ENCODE measurements at regions of chr10 and their contacts with region 1.

Region 1: DNA sequence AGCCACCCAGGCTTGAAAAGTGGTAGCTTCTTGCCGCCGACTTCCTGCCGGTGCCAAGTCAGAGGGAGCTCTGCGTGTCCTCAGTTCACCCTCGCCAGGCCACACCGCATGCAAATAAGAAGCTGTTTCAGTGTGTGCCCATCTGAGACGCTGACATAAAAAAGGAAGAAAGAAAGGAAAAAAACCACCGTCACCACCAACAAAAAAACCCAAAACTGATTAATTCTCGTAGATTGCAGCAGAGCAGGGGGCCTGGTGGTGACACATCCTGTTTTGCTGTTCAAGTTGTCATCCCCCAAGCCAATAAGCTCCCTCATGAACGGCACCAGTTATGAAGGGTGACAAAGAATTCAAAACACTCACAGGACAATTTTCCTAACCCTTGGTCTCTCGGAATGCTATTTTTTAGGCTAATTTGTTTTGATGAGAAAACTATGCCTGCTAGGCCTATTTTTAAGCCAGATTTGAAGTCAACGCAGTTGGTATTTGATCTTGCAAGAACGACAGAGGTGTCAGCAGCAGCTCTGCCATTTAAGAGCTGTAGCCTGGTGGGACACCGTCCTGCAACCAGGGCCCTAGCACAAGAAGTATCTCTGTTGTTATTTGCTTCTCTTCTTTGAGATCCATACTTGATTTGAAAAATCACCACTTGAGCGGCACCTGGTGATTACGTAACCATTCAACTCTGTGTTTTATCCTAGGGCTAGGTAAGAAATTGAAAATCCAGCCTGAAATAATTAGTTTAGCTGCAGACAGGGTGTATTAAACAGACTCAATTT is 145.6 kb downstream of the PFKFB3 start:
- DNase-seq: peak; percentile 65
- ATAC-seq: peak; percentile 91
- H3K4me3 Mint-ChIP-seq: peak overlapping the region; percentile 80
- H3K27ac Mint-ChIP-seq: peak overlapping the region; percentile 97
- H3K4me1 Mint-ChIP-seq: peaks cover 57% of the 10 kb centered on the region
- H3K27me3 Mint-ChIP-seq: no peaks in the 10 kb centered on the region
- CTCF ChIP-seq: no peak

Region 2: GRCh38 chr10:6108603-6109443 is 239.5 kb before region 1 on chr10:
- CTCF ChIA-PET with region 1: no interaction called
- POLR2A ChIA-PET with region 1: no interaction called
- intact Hi-C with region 1: loop called (anchors 1 kb)
- DNase-seq: no peak
- ATAC-seq: peak; percentile 84
- H3K4me3 Mint-ChIP-seq: no peak overlapping the region
- H3K27ac Mint-ChIP-seq: peak overlapping the region; percentile 65
- H3K4me1 Mint-ChIP-seq: peaks cover 12% of the 10 kb centered on the region
- H3K27me3 Mint-ChIP-seq: no peaks in the 10 kb centered on the region
- CTCF ChIP-seq: peak; percentile 88

Region 3: DNA sequence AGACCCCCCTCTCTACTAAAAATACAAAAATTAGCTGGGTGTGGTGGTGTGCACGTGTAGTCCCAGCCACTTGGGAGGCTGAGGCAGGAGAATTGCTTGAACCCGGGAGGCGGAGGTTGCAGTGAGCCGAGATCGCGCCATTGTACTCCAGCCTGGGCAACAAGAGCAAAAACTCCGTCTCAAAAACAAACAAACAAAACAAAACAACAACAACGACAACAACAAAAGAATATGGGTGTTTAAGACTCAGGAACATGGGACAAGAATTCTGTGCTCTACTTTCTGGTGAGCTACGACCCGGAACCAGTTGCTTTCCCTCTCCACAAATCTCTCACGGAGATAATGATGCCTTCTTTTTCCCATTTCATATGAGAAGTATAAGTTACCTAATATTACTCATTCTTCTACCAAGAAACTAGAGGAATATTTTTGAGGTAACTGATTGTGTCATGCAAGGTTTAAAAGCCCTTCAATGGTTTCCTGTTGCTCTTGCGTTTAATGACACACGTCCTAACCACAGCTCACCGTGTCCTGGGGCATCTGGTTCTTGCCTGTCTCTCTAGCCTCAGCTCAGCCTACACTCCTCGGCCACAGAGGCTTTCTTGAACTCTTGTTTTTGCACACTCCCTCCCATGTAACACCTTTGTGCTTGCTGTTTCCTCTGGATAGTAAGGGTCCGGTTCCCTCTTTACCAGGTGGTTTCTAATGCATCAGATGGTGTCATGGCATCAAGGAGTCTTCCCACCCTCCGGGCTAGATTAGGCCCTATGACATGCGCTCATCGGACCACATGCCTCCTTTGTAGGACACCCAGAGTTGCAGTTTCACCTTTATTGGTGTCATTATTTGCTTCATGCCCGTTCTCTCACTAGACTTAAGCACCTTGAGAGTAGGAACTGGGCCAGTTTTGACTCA is 78.1 kb before region 1 on chr10:
- CTCF ChIA-PET with region 1: interaction called, 4 read pairs
- POLR2A ChIA-PET with region 1: interaction called, 29 read pairs
- intact Hi-C with region 1: loop called (anchors 1 kb)
- DNase-seq: peak; percentile 19
- ATAC-seq: peak; percentile 49
- H3K4me3 Mint-ChIP-seq: peak overlapping the region; percentile 24
- H3K27ac Mint-ChIP-seq: peak overlapping the region; percentile 73
- H3K4me1 Mint-ChIP-seq: peaks cover 35% of the 10 kb centered on the region
- H3K27me3 Mint-ChIP-seq: no peaks in the 10 kb centered on the region
- CTCF ChIP-seq: no peak

Region 4: DNA sequence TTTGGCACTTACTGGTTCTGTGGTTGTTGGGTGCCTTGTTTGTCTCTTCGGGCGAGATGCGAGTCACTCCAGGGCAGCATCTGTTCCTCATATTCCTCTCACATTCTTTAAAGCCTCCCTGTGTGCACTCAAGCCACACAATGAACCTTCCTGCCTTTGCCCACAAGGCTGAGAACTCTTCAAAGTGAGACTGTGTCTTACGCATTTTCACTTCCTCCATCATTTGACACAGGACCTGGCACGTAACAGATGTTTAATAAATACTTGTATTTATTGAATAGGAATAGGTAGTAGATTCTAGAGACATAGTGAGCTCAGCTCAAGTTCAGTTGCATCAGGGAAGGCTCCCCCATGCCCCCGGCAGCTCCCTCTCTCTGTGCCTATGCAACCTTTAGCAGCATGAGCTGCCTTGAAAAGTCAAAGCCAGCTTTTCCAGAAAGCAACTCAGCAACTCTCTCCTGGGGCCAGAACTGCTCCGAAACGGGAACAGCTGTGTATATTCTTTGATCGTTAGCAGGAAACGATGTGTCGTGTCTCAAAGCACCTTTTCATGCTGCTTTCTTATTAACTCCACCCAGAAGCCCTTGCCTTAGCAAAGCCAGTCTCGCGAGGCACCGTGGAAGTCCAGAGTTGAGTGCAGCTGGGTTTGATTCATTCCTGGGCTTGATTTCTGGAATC is 48.0 kb before region 1 on chr10:
- CTCF ChIA-PET with region 1: interaction called, 26 read pairs
- POLR2A ChIA-PET with region 1: interaction called, 129 read pairs
- intact Hi-C with region 1: loop called (anchors 1 kb)
- DNase-seq: peak; percentile 48
- ATAC-seq: peak; percentile 80
- H3K4me3 Mint-ChIP-seq: peak overlapping the region; percentile 75
- H3K27ac Mint-ChIP-seq: peak overlapping the region; percentile 96
- H3K4me1 Mint-ChIP-seq: peaks cover 82% of the 10 kb centered on the region
- H3K27me3 Mint-ChIP-seq: no peaks in the 10 kb centered on the region
- CTCF ChIP-seq: no peak

Region 5: GRCh38 chr10:6320320-6321010 is 27.8 kb before region 1 on chr10:
- CTCF ChIA-PET with region 1: interaction called, 13 read pairs
- POLR2A ChIA-PET with region 1: interaction called, 39 read pairs
- intact Hi-C with region 1: loop called (anchors 1 kb)
- DNase-seq: peak; percentile 24
- ATAC-seq: peak; percentile 92
- H3K4me3 Mint-ChIP-seq: peak overlapping the region; percentile 57
- H3K27ac Mint-ChIP-seq: no peak overlapping the region
- H3K4me1 Mint-ChIP-seq: peaks cover 23% of the 10 kb centered on the region
- H3K27me3 Mint-ChIP-seq: no peaks in the 10 kb centered on the region
- CTCF ChIP-seq: no peak

Region 6: DNA sequence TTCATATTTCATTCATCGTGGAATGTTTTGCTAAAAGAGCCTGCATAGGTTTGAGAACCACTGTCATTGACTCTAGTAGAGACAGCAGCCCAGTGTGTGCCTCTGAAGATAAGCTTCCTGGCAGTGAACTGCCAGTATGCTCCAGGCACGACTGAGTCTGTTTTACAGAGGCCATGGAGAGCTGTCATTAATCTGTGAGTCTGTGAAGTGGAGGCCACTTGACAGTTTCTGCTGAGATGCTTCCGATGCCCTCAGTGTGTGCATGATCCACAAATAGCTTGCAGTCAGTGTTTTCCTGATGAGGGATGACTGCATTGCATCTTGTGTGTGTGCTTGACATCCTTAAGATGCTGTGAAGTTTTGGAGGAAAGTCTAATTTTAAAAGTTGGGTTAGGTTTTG is 16.6 kb after region 1 on chr10:
- CTCF ChIA-PET with region 1: no interaction called
- POLR2A ChIA-PET with region 1: interaction called, 10 read pairs
- intact Hi-C with region 1: no loop called
- DNase-seq: no peak
- ATAC-seq: no peak
- H3K4me3 Mint-ChIP-seq: no peak overlapping the region
- H3K27ac Mint-ChIP-seq: no peak overlapping the region
- H3K4me1 Mint-ChIP-seq: peaks cover 4% of the 10 kb centered on the region
- H3K27me3 Mint-ChIP-seq: no peaks in the 10 kb centered on the region
- CTCF ChIP-seq: no peak

Region 7: GRCh38 chr10:6542999-6543430 is 194.7 kb after region 1 on chr10:
- CTCF ChIA-PET with region 1: no interaction called
- POLR2A ChIA-PET with region 1: no interaction called
- intact Hi-C with region 1: no loop called
- DNase-seq: no peak
- ATAC-seq: no peak
- H3K4me3 Mint-ChIP-seq: peak overlapping the region; percentile 63
- H3K27ac Mint-ChIP-seq: no peak overlapping the region
- H3K4me1 Mint-ChIP-seq: peaks cover 7% of the 10 kb centered on the region
- H3K27me3 Mint-ChIP-seq: peaks cover 12% of the 10 kb centered on the region
- CTCF ChIP-seq: no peak

Region 8: DNA sequence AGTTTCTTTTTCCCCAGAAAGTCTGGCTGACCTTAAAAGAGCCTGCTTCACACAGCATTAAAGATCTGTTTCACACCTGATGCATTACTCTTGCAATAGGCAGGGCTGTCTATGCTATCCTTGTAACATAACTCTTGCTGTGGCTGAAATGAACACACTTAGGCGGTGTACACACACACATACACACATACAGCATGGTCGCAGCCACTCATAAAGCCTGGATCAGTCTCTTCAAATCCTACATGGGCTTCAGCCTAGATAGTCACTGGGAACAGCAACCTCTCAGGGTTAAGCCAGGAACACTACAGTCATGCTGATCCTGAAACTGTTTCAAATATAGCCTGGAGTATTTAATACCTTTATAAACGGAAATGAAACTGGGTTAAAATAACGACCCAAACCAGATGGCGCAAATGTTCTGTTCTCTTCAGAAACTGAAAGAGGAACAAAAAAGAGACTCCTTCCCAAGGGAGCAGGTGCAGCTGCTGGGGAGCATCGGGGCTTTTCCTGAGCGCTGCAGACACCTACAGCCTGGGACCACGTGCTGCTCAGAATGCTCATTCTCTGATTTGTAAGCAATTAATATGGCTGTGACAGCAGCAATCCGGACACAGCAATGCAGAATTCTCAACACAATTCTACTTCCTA is 1123.6 kb after region 1 on chr10:
- CTCF ChIA-PET with region 1: no interaction called
- POLR2A ChIA-PET with region 1: interaction called, 3 read pairs
- intact Hi-C with region 1: loop called (anchors 1 kb)
- DNase-seq: peak; percentile 59
- ATAC-seq: peak; percentile 89
- H3K4me3 Mint-ChIP-seq: peak overlapping the region; percentile 73
- H3K27ac Mint-ChIP-seq: peak overlapping the region; percentile 90
- H3K4me1 Mint-ChIP-seq: peaks cover 78% of the 10 kb centered on the region
- H3K27me3 Mint-ChIP-seq: no peaks in the 10 kb centered on the region
- CTCF ChIP-seq: no peak